Spleen (tissue), 13 donors: ENCODE measurements at regions of chr9 and their contacts with region 1.

Region 1: GRCh38 chr9:14616188-14616982 is 76.8 kb downstream of the ZDHHC21 start:
- DNase-seq: no peak
- H3K4me3 ChIP-seq: no peak overlapping the region
- H3K27ac ChIP-seq: no peak overlapping the region
- H3K4me1 ChIP-seq: no peaks in the 10 kb centered on the region
- H3K27me3 ChIP-seq: no peaks in the 10 kb centered on the region
- CTCF ChIP-seq: peak in 10 of 11 experiments; percentile 20 to 65 (median 56)
- POLR2A ChIP-seq: no peak

Region 2: DNA sequence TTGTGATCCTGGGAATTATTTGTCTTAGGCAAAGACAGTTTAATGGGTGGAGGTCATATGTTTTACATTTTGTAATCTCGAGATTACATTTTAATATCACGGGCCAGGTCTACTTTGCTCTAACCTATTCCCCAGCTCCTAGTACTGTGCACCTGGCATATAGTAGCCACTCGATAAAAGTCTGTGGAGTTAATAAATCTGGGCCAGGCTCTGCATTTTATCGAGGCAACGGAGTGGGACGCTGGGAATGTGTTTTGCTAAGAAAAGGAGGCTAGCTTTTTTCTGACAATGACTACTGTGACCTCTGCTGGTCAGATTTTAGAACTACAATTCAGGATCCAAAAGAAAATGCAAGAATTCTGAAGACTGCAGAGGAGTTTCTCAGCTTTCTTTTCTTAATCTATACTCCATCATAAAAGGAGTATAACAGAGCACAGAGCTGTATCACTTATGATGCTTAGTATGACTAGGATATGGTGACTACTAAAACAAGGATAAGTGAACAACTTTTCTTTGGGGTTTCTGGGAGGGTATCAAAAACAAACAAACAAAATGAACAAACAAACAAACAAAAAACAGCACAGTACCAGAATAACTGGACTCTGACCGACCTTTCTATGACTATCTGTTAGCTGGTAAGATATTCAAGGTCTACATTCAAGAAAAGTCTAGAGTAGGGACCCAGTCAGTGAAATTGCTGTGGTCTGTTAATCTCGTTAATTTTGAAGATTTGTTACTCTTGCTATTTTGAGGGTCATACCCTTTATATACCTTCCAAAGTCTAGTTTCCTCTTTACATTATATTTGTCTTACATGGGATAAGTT is 152.2 kb after region 1 on chr9:
- intact Hi-C with region 1: loop called (anchors 2 kb)
- DNase-seq: no peak
- H3K4me3 ChIP-seq: no peak overlapping the region
- H3K27ac ChIP-seq: no peak overlapping the region
- H3K4me1 ChIP-seq: peaks cover 0 to 4% (median 0%) of the 10 kb centered on the region in 6 donors
- H3K27me3 ChIP-seq: peaks cover 0 to 6% (median 0%) of the 10 kb centered on the region in 7 donors
- CTCF ChIP-seq: peak; percentile 39 to 77 (median 63)
- POLR2A ChIP-seq: no peak

Region 3: GRCh38 chr9:15135164-15135792 is 518.9 kb after region 1 on chr9:
- intact Hi-C with region 1: loop called (anchors 10 kb)
- DNase-seq: no peak
- H3K4me3 ChIP-seq: peak overlapping the region in 1 of 8 donors; percentile 16
- H3K27ac ChIP-seq: no peak overlapping the region
- H3K4me1 ChIP-seq: peaks cover 0 to 8% (median 7%) of the 10 kb centered on the region in 6 donors
- H3K27me3 ChIP-seq: peaks cover 0 to 3% (median 0%) of the 10 kb centered on the region in 7 donors
- CTCF ChIP-seq: peak; percentile 55 to 90 (median 82)
- POLR2A ChIP-seq: no peak